Activated naive CD4-positive, alpha-beta T cell treated with anti-CD3 and anti-CD28 coated beads, Interleukin-2, amount 10 ng/mL, durations not matched to agents 7 days and 5 days (primary cell): ENCODE measurements at regions of chr6 and their contacts with region 1.

Region 1: GRCh38 chr6:43667245-43668150 is 20.1 kb downstream of the MRPS18A start:
- DNase-seq: peak; percentile 88
- H3K4me3 Mint-ChIP-seq: peak overlapping the region; percentile 41
- H3K27ac Mint-ChIP-seq: peak overlapping the region; percentile 71
- H3K4me1 Mint-ChIP-seq: peaks cover 46% of the 10 kb centered on the region
- H3K27me3 Mint-ChIP-seq: peaks cover 16% of the 10 kb centered on the region

Region 2: DNA sequence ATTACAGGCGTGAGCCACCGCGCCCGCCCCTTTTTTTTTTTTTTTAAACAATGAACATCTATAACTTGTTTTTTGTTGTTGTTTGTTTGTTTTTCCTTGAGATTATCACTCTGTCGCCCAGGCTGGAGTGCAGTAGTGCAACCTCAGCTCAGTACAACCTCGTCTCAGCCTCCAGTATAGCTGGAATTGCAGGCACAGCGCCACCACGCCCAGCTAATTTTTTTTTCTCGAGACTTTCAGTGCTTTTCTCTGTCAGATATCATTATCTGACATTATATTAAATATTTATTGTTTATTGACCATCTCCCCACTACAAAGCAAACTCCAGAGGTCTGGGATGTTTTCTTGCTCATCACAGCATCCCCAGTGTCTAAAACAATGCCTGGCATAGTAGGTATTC is 209.9 kb before region 1 on chr6:
- CTCF ChIA-PET with region 1: no interaction called
- DNase-seq: no peak
- H3K4me3 Mint-ChIP-seq: no peak overlapping the region
- H3K27ac Mint-ChIP-seq: no peak overlapping the region
- H3K4me1 Mint-ChIP-seq: peaks cover 15% of the 10 kb centered on the region
- H3K27me3 Mint-ChIP-seq: peaks cover 55% of the 10 kb centered on the region

Region 3: DNA sequence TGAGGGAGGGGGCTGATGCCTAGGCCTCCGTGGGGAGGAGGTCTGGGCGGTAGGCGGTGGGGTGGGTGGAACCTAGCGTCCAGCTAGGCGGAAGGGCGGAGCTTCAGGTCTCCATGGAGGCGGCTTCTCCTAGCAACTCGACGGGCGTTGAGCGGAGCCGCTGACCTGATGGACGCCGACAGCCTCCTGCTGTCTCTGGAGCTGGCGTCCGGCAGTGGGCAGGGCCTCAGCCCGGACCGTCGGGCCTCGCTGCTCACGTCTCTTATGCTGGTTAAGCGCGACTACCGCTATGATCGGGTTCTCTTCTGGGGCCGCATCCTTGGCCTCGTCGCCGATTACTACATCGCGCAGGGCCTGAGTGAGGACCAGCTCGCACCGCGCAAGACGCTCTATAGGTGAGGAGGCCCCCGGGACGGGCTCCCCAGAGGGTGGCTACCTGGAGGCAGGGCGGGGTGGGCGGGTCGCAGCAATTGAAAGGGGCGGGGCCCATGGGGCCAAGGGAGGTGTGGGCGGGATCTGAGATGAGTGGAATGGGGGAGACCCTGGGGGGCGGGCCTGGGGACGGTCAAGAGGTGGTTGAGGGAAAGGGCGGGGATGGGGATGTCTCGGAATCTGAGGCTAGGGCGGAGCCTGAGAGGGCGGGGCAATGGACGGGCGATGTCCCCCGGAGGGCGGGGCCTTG is 22.4 kb before region 1 on chr6 and contains the start of gene RSPH9:
- CTCF ChIA-PET with region 1: interaction called, 12 read pairs
- DNase-seq: peak; percentile 79
- H3K4me3 Mint-ChIP-seq: peak within 1 kb of the TSS; percentile 65
- H3K27ac Mint-ChIP-seq: peak within 1 kb of the TSS; percentile 50
- H3K4me1 Mint-ChIP-seq: peaks cover 22% of the 10 kb centered on the region
- H3K27me3 Mint-ChIP-seq: peaks cover 8% of the 10 kb centered on the region

Region 4: GRCh38 chr6:43679057-43679456 is 11.6 kb after region 1 on chr6:
- CTCF ChIA-PET with region 1: interaction called, 13 read pairs
- DNase-seq: no peak
- H3K4me3 Mint-ChIP-seq: no peak overlapping the region
- H3K27ac Mint-ChIP-seq: no peak overlapping the region
- H3K4me1 Mint-ChIP-seq: peaks cover 10% of the 10 kb centered on the region
- H3K27me3 Mint-ChIP-seq: no peaks in the 10 kb centered on the region

Region 5: GRCh38 chr6:43723737-43724295 is 56.3 kb after region 1 on chr6:
- CTCF ChIA-PET with region 1: interaction called, 13 read pairs
- DNase-seq: peak; percentile 84
- H3K4me3 Mint-ChIP-seq: no peak overlapping the region
- H3K27ac Mint-ChIP-seq: no peak overlapping the region
- H3K4me1 Mint-ChIP-seq: peaks cover 30% of the 10 kb centered on the region
- H3K27me3 Mint-ChIP-seq: peaks cover 26% of the 10 kb centered on the region

Region 6: GRCh38 chr6:43769526-43770416 is 102.3 kb after region 1 on chr6 and contains the start of gene VEGFA:
- CTCF ChIA-PET with region 1: interaction called, 43 read pairs
- DNase-seq: peak; percentile 92
- H3K4me3 Mint-ChIP-seq: peak within 1 kb of the TSS; percentile 96
- H3K27ac Mint-ChIP-seq: peak within 1 kb of the TSS; percentile 88
- H3K4me1 Mint-ChIP-seq: peaks cover 29% of the 10 kb centered on the region
- H3K27me3 Mint-ChIP-seq: peaks cover 34% of the 10 kb centered on the region

Region 7: DNA sequence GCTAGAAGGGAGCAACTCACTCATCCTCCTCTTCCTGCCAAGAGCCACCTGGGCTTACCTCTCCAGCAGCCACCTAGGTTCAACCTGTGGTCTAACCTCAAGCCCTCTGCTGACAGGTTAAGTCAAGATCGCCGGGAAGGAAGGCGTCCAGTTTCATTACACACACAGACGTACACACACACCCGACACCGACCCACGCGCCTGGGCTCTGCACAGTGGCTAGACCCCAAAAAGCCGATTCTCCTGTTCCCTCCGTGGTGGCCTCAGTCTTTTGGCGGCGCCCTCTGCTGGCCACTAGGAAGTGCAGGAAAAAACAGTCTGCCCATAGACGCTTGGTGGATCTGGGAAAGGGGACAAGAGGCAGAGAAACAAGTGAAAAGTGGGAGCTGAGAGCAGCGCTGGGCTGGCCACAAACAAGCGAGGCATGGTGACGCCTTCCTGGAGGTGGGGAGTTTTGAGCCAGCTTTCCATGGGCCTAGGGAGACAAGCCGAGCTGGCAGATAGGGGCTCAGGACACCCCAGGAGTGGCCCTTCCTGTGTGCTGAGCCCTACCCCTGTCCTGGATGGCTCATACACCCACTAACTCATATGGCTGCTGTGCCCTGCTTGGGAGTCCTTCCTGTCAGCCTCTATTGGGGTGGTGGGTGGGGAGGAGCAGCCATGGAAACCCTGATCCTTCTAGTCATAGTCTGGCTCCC is 407.1 kb after region 1 on chr6:
- CTCF ChIA-PET with region 1: interaction called, 40 read pairs
- DNase-seq: peak; percentile 82
- H3K4me3 Mint-ChIP-seq: peak overlapping the region; percentile 84
- H3K27ac Mint-ChIP-seq: peak overlapping the region; percentile 42
- H3K4me1 Mint-ChIP-seq: peaks cover 30% of the 10 kb centered on the region
- H3K27me3 Mint-ChIP-seq: peaks cover 70% of the 10 kb centered on the region

Region 8: GRCh38 chr6:44177678-44178423 is 510.4 kb after region 1 on chr6:
- CTCF ChIA-PET with region 1: no interaction called
- DNase-seq: no peak
- H3K4me3 Mint-ChIP-seq: no peak overlapping the region
- H3K27ac Mint-ChIP-seq: no peak overlapping the region
- H3K4me1 Mint-ChIP-seq: peaks cover 14% of the 10 kb centered on the region
- H3K27me3 Mint-ChIP-seq: peaks cover 42% of the 10 kb centered on the region